ENCODE measurements at regions of chr6 and their contacts with region 1.

Region 1: DNA sequence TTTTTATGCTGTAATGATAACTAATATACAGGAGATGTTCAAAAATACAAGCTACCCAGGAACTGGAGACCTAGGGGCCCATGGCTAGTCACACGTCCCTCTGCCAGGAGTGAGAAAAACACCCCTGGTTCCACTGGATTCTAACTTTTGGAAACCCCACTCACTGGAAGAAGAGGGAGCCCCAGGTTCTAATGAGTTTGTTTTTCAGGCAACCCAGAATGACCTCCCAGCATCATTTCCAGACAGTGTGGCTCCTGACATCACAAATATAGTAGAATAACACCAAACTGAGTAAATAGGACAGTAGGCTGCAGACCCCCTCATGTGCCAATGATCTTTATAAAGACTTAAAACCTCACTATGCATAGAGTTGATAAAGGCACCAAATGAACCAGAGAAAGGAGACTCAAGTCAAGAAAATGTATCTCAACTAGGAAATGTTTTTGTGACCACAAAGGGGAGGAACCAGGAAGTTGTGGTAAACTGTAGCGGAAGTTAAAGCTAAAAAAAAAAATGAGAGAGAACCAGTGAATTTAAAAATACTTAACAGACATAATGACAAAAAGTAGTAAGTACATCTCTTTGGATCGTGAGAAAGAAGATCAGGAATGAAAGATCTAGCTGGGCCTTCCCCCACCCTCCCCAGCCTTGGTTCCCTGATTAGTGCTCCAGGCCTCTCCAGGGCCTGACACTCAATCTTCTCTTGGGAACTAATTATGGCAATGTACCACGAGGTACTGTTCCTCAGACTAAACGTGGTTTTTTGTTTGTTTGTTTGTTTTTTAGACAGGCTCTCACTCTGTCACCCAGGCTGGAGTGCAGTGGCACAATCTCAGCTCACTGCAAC is 19.8 kb downstream of the HLA-E start:
- DNase-seq: peak; percentile 53
- H3K4me3 Mint-ChIP-seq: peak overlapping the region; percentile 19
- H3K27ac Mint-ChIP-seq: peak overlapping the region; percentile 93
- H3K4me1 Mint-ChIP-seq: peaks cover 47% of the 10 kb centered on the region
- H3K27me3 Mint-ChIP-seq: no peaks in the 10 kb centered on the region

Region 2: GRCh38 chr6:30453508-30454116 is 55.5 kb before region 1 on chr6:
- intact Hi-C with region 1: no loop called
- DNase-seq: peak; percentile 77
- H3K4me3 Mint-ChIP-seq: peak overlapping the region; percentile 25
- H3K27ac Mint-ChIP-seq: no peak overlapping the region
- H3K4me1 Mint-ChIP-seq: peaks cover 24% of the 10 kb centered on the region
- H3K27me3 Mint-ChIP-seq: peaks cover 80% of the 10 kb centered on the region

Region 3: GRCh38 chr6:30489081-30490025 is 19.8 kb before region 1 on chr6 and contains the start of gene HLA-E:
- intact Hi-C with region 1: loop called (anchors 1 kb)
- DNase-seq: peak; percentile 91
- H3K4me3 Mint-ChIP-seq: peak within 1 kb of the TSS; percentile 97
- H3K27ac Mint-ChIP-seq: peak within 1 kb of the TSS; percentile 99
- H3K4me1 Mint-ChIP-seq: peaks cover 64% of the 10 kb centered on the region
- H3K27me3 Mint-ChIP-seq: peaks cover 3% of the 10 kb centered on the region
- total RNA-seq, gene HLA-E: 476 and 483 TPM in 2 replicates